B cell (primary cell): ENCODE measurements at regions of chr19 and their contacts with region 1.

Region 1: DNA sequence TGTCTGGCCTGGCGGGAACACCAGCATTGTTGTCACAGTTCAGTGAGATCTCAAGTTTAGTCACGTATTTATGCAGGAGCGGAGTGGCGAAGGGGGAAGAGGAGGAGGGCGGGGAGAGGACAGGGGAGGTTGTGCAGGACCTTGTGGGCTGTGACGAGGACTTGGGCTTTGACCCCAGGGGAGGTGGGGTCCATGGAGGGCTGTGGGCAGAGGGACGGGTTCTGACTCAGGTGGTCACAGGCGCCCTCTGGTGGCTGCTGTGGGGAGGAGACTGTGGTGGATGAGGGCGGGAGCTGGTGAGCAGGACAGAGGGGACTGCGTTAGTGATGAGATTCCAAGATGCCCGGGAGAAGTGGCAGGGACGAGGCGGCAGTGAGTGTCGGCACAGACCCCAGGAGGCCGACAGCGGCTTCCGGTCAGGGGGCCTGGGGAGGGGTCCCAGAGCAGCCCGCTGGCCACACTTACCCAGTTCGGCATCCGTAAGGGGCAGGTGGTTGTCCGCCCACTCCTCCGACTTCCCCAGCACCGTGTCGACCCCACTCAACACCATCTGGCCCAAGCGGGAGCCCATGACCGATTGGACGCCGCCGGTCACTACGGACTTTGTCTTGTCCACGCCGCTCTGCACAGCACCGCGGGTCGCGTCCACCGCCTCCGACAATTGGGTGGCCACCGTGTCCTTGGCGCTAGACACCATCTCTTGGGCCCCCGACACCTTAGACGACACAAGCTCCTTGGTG is 15.7 kb downstream of the PLIN3 start:
- DNase-seq: peak; percentile 82
- ATAC-seq: peak; percentile 89
- H3K4me3 ChIP-seq: no peak overlapping the region
- H3K4me3 Mint-ChIP-seq: peak overlapping the region; percentile 35
- H3K27ac ChIP-seq: no peak overlapping the region
- H3K27ac Mint-ChIP-seq: no peak overlapping the region
- H3K4me1 ChIP-seq: peaks cover 0 to 13% of the 10 kb centered on the region in 2 donors
- H3K4me1 Mint-ChIP-seq: peaks cover 9% of the 10 kb centered on the region
- H3K27me3 ChIP-seq: no peaks in the 10 kb centered on the region
- H3K27me3 Mint-ChIP-seq: no peaks in the 10 kb centered on the region
- CTCF ChIP-seq: peak; percentile 85

Region 2: GRCh38 chr19:4744451-4745174 is 107.1 kb before region 1 on chr19:
- CTCF ChIA-PET with region 1: no interaction called
- POLR2A ChIA-PET with region 1: no interaction called
- intact Hi-C with region 1: no loop called
- DNase-seq: no peak
- ATAC-seq: no peak
- H3K4me3 ChIP-seq: no peak overlapping the region
- H3K4me3 Mint-ChIP-seq: no peak overlapping the region
- H3K27ac ChIP-seq: no peak overlapping the region
- H3K27ac Mint-ChIP-seq: no peak overlapping the region
- H3K4me1 ChIP-seq: no peaks in the 10 kb centered on the region
- H3K4me1 Mint-ChIP-seq: no peaks in the 10 kb centered on the region
- H3K27me3 ChIP-seq: peaks cover 0 to 26% (median 5%) of the 10 kb centered on the region in 4 experiments
- H3K27me3 Mint-ChIP-seq: peaks cover 30% of the 10 kb centered on the region
- CTCF ChIP-seq: no peak

Region 3: GRCh38 chr19:4823577-4823976 is 28.1 kb before region 1 on chr19:
- CTCF ChIA-PET with region 1: interaction called, 612 read pairs
- POLR2A ChIA-PET with region 1: no interaction called
- intact Hi-C with region 1: no loop called
- DNase-seq: no peak
- ATAC-seq: no peak
- H3K4me3 ChIP-seq: no peak overlapping the region
- H3K4me3 Mint-ChIP-seq: no peak overlapping the region
- H3K27ac ChIP-seq: no peak overlapping the region
- H3K27ac Mint-ChIP-seq: no peak overlapping the region
- H3K4me1 ChIP-seq: peaks cover 0 to 9% of the 10 kb centered on the region in 2 donors
- H3K4me1 Mint-ChIP-seq: peaks cover 10% of the 10 kb centered on the region
- H3K27me3 ChIP-seq: no peaks in the 10 kb centered on the region
- H3K27me3 Mint-ChIP-seq: no peaks in the 10 kb centered on the region
- CTCF ChIP-seq: no peak